CD8-positive, alpha-beta T cell (primary cell): ENCODE measurements at regions of chr4 and their contacts with region 1.

Region 1: DNA sequence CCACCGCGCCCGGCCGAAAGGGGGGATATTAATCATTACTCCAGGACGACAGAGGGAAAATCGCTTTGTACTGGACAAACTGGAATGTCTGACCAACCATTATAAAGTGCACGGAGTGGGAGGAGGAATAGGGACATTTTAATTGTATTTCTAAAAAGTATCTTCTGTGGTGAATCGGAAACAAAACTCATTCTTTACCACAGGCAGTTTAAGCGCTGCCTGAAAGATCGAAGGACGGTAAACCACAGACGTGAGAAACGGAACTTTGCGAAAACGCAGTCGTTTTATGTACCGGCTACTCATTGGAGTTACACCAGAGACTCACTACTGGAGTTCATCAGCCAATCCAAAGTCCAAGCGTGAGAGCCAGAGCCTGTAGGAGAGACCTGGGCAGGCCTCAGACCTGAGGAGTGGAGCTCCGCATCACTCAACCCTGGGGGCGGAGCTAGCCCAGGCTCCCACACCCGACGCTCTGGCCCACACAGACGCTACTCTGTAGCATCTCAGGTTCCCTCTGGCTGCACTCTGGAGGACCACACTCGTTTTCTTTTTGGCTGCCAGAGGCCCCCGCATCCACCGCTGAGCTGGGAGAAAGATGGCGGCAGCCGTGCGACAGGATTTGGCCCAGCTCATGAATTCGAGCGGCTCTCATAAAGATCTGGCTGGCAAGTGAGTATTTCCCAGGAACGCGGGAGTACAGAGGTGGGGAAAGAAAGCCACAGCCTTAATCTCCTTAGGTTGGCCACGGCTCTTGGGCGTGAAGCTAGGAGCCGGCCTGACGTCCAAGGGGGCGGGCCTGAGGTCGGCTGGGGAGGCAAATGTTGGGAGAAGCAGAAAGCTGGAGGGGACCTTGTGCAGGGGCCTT is at the start of gene COPS4:
- DNase-seq: peak; percentile 87 to 100 (median 94)
- ATAC-seq: peak; percentile 98
- H3K4me3 ChIP-seq: peak within 1 kb of the TSS; percentile 73 to 90
- H3K4me3 Mint-ChIP-seq: peak within 1 kb of the TSS; percentile 99
- H3K27ac ChIP-seq: peak within 1 kb of the TSS; percentile 76 to 92
- H3K27ac Mint-ChIP-seq: peak within 1 kb of the TSS; percentile 99
- H3K4me1 ChIP-seq: peaks cover 16% of the 10 kb centered on the region
- H3K4me1 Mint-ChIP-seq: peaks cover 41% of the 10 kb centered on the region
- H3K27me3 ChIP-seq: no peaks in the 10 kb centered on the region
- H3K27me3 Mint-ChIP-seq: no peaks in the 10 kb centered on the region
- CTCF ChIP-seq: peak; percentile 51
- total RNA-seq, gene COPS4: 32.2 to 35.2 TPM

Region 2: DNA sequence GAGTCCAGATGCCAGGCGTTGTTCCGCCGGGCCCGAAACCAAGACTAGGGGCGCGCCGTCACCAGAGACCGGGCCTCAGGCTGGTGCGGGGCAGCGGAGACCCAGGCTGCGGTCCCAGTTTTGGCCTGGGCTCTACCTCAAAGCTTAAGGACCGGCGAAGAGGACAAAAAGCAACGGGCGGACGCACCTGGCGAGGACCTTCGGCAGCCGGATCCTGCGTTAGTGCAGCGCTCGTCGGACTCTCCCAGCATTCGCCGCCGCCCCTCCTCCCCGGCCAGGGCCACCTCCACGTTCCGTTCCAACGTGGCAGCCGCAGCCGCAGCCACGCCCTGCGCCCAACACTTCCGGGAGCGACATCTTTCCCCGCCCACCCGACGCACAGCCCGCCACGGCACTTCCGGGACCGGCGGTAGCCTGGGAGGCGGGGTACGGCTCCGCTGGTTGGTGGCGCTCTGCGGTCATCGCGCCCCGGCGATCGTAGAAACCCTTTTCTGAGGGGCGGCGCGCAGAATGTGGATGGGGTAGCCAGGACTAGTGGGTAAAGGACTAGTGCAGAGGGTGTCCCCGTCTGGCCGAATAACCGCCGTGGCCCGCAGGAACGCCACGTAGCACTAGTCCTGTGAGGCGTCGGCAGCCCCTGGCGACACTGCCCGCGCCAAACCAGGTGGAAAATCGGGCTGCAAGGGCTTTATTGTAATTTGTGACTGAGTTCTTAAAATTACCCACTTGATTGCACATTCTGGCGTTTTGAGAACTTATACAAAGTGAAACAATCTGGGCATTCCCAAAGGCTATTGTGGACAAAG is 143.8 kb before region 1 on chr4 and contains the start of gene SEC31A:
- CTCF ChIA-PET with region 1: no interaction called
- POLR2A ChIA-PET with region 1: interaction called, 7 read pairs
- intact Hi-C with region 1: loop called (anchors 1 to 5 kb)
- DNase-seq: peak; percentile 93 to 99 (median 97)
- ATAC-seq: peak; percentile 93
- H3K4me3 ChIP-seq: peak within 1 kb of the TSS; percentile 87 to 88
- H3K4me3 Mint-ChIP-seq: peak within 1 kb of the TSS; percentile 89
- H3K27ac ChIP-seq: peak within 1 kb of the TSS; percentile 96
- H3K27ac Mint-ChIP-seq: peak within 1 kb of the TSS; percentile 98
- H3K4me1 ChIP-seq: peaks cover 22% of the 10 kb centered on the region
- H3K4me1 Mint-ChIP-seq: peaks cover 45% of the 10 kb centered on the region
- H3K27me3 ChIP-seq: no peaks in the 10 kb centered on the region
- H3K27me3 Mint-ChIP-seq: no peaks in the 10 kb centered on the region
- CTCF ChIP-seq: no peak
- total RNA-seq, gene SEC31A: 115 to 117 TPM

Region 3: DNA sequence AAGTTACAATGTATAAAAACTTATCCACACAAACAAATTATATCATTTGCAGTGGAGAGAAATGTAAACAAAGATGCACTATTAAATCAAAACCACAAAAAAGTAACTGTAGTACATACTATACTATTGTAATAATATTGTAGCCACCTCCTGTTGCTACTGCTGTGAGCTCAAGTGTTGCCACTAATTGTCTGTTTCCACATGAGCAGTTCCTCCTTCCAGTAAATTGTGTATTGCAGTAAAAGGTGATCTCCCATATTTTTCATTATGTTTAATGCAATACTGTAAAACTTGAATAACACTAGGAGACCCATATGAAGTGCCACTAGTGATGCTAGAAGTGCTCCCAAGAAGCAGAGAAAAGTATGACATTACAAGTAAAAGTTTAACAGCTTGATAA is 36.0 kb before region 1 on chr4:
- CTCF ChIA-PET with region 1: interaction called, 3 read pairs
- POLR2A ChIA-PET with region 1: interaction called, 3 read pairs
- intact Hi-C with region 1: loop called in 1 of 2 experiments (anchors 5 kb)
- DNase-seq: no peak
- ATAC-seq: no peak
- H3K4me3 ChIP-seq: no peak overlapping the region
- H3K4me3 Mint-ChIP-seq: no peak overlapping the region
- H3K27ac ChIP-seq: no peak overlapping the region
- H3K27ac Mint-ChIP-seq: no peak overlapping the region
- H3K4me1 ChIP-seq: no peaks in the 10 kb centered on the region
- H3K4me1 Mint-ChIP-seq: peaks cover 20% of the 10 kb centered on the region
- H3K27me3 ChIP-seq: no peaks in the 10 kb centered on the region
- H3K27me3 Mint-ChIP-seq: no peaks in the 10 kb centered on the region
- CTCF ChIP-seq: no peak

Region 4: GRCh38 chr4:83012687-83013419 is 22.0 kb before region 1 on chr4:
- CTCF ChIA-PET with region 1: interaction called, 10 read pairs
- POLR2A ChIA-PET with region 1: interaction called, 49 read pairs
- intact Hi-C with region 1: loop called (anchors 1 kb)
- DNase-seq: peak; percentile 94 to 98 (median 96)
- ATAC-seq: peak; percentile 88
- H3K4me3 ChIP-seq: peak overlapping the region; percentile 54 to 69
- H3K4me3 Mint-ChIP-seq: peak overlapping the region; percentile 90
- H3K27ac ChIP-seq: peak overlapping the region; percentile 56 to 95
- H3K27ac Mint-ChIP-seq: peak overlapping the region; percentile 91
- H3K4me1 ChIP-seq: peaks cover 31% of the 10 kb centered on the region
- H3K4me1 Mint-ChIP-seq: peaks cover 40% of the 10 kb centered on the region
- H3K27me3 ChIP-seq: no peaks in the 10 kb centered on the region
- H3K27me3 Mint-ChIP-seq: no peaks in the 10 kb centered on the region
- CTCF ChIP-seq: peak; percentile 65